Heart right ventricle (tissue), 16 donors: ENCODE measurements at regions of chr12 and their contacts with region 1.

Region 1: GRCh38 chr12:99600388-99600787 is 47.2 kb upstream of the GARIN6 start:
- DNase-seq: no peak
- ATAC-seq: no peak
- H3K4me3 ChIP-seq: no peak overlapping the region
- H3K27ac ChIP-seq: no peak overlapping the region
- H3K4me1 ChIP-seq: no peaks in the 10 kb centered on the region
- H3K27me3 ChIP-seq: no peaks in the 10 kb centered on the region
- CTCF ChIP-seq: no peak

Region 2: DNA sequence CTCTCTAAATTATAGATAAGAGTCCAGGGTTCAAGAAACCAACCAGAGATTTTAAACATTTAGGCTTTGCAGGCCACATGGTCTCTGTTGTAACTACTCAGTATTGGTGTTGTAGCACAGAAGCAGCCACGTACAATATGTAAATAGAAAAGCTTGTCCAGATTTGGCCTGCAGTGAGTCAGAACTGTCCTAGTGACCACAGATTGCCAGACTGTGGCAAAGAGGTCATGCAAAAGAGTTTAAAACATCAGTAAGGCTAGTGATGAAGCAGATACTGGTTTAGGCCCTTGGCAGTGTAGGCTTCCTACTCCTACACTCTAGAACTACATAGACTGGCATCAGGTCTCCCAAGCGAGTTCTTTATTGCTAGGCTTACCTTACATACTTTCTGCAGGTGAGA is 70.4 kb before region 1 on chr12:
- intact Hi-C with region 1: loop called in 1 of 10 experiments (anchors 2 kb)
- DNase-seq: no peak
- ATAC-seq: no peak
- H3K4me3 ChIP-seq: no peak overlapping the region
- H3K27ac ChIP-seq: no peak overlapping the region
- H3K4me1 ChIP-seq: no peaks in the 10 kb centered on the region
- H3K27me3 ChIP-seq: no peaks in the 10 kb centered on the region
- CTCF ChIP-seq: no peak

Region 3: GRCh38 chr12:99658671-99659349 is 58.4 kb after region 1 on chr12:
- intact Hi-C with region 1: no loop called
- DNase-seq: no peak
- ATAC-seq: no peak
- H3K4me3 ChIP-seq: no peak overlapping the region
- H3K27ac ChIP-seq: no peak overlapping the region
- H3K4me1 ChIP-seq: no peaks in the 10 kb centered on the region
- H3K27me3 ChIP-seq: no peaks in the 10 kb centered on the region
- CTCF ChIP-seq: peak in 6 of 9 donors; percentile 14 to 47 (median 30)